ENCODE measurements at regions of chr3 and their contacts with region 1.

Region 1: GRCh38 chr3:45367453-45367871 is 20.9 kb upstream of the LARS2 start:
- DNase-seq: no peak
- H3K4me3 ChIP-seq: no peak overlapping the region
- H3K27ac ChIP-seq: no peak overlapping the region
- H3K4me1 ChIP-seq: no peaks in the 10 kb centered on the region
- H3K27me3 ChIP-seq: no peaks in the 10 kb centered on the region
- CTCF ChIP-seq: no peak
- POLR2A ChIP-seq: no peak

Region 2: DNA sequence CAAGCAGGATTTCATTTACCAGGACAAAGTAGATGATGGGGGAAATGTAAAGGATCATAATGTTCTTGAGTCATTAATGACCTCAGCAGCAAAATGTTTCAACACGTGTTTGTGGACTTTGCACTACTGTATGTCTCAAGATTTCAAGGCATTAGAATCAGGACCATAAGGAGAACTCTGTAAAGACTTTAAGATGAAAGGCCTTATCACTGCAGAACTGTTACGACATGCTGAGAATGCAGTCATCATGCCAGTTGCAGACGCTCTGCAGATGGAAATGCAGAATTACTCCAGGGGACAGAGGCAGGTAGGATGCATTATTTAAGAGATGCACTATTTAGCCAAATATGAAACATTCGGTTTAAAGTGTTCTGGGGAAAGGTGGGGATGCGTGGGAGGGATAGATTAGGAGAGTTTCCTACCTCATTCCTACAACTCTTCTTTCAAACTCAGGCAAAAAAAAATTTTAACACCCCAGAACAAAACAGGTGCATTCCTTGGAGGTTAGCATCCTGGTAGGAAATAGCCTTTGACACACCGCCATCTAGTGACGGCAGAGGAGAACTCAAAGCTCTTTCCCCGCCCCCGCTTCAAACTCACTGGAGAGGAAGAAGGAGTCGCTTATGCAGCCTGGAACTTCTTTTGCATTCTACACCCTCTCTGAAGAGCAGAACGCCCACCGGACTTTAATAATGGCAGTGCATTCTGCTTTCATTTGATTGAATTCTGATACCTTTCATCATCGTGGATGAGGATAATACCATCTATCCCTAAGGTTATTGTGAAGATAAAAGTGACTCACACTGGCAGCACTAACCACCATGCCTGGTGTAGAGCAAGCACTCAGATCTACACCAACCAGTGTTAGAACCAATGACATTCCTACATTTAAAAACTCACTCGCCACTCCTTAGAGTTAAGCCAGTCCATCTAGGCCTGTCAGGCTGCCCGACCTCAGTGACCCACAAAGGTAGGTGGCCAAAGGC is 1168.9 kb before region 1 on chr3:
- intact Hi-C with region 1: no loop called
- DNase-seq: peak; percentile 57 to 65
- H3K4me3 ChIP-seq: no peak overlapping the region
- H3K27ac ChIP-seq: no peak overlapping the region
- H3K4me1 ChIP-seq: no peaks in the 10 kb centered on the region
- H3K27me3 ChIP-seq: peaks cover 0 to 3% of the 10 kb centered on the region in 2 donors
- CTCF ChIP-seq: peak; percentile 41 to 85 (median 77)
- POLR2A ChIP-seq: no peak

Region 3: DNA sequence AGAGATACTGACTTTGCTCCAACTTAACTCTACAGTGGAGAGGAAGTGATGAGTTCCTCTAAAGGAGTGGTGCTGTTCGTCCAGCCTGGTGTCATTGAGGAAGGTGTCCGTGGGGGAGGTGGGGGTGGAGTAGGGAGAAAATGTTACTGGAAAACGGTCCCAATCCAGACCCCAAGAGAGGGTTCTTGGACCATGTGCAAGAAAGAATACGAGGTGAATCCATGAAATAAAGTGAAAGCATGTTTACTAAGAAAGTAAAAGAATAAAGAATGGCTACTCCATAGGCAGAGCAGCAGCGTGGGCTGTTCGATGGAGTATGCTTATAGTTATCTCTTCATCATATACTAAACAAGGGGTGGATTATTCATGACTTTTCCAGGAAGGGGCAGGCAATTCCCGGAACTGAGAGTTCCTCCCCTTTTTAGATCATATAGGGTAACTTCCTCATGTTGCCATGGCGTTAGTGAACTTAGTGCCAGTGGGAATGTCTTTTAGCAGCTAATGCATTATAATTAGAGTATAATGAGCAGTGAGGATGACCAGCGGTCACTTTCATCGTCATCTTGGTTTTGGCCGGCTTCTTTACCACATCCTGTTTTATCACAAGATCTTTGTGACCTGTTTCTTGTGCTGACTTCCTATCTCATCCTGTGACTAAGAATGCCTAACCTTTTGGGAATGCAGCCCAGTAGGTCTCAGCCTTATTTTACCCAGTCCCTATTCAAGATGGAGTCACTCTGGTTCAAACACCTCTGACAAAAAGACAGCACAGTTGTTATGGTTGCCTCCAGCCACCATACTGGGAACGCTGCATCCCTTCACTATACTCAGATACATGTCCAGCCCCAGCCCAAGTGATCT is 302.7 kb before region 1 on chr3:
- intact Hi-C with region 1: loop called (anchors 10 kb)
- DNase-seq: no peak
- H3K4me3 ChIP-seq: peak overlapping the region in 1 of 3 donors; percentile 35
- H3K27ac ChIP-seq: peak overlapping the region in 1 of 2 donors; percentile 75
- H3K4me1 ChIP-seq: no peaks in the 10 kb centered on the region
- H3K27me3 ChIP-seq: no peaks in the 10 kb centered on the region
- CTCF ChIP-seq: no peak
- POLR2A ChIP-seq: no peak

Region 4: GRCh38 chr3:45333549-45333948 is 33.9 kb before region 1 on chr3:
- intact Hi-C with region 1: loop called (anchors 2 kb)
- DNase-seq: no peak
- H3K4me3 ChIP-seq: no peak overlapping the region
- H3K27ac ChIP-seq: no peak overlapping the region
- H3K4me1 ChIP-seq: no peaks in the 10 kb centered on the region
- H3K27me3 ChIP-seq: no peaks in the 10 kb centered on the region
- CTCF ChIP-seq: no peak
- POLR2A ChIP-seq: no peak

Region 5: DNA sequence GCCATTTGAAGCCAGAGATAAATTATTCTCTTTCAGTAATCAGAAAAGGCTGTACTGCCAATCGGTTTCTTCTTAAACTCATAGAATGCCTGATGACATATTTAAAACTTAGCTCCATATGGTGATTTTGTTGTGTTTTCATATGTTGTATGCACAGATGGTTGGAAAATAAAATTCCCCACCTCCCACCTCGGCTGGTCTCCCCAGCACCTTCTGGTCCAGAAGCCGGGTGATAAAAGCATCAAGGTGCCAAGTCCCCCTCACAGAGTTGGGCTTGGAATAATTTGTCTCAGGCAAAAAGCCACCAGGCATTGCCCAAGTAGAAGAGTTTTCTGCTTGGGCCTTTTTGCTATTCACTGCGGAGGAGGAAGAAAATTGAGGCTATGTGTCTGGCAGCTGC is 39.3 kb after region 1 on chr3:
- intact Hi-C with region 1: no loop called
- DNase-seq: no peak
- H3K4me3 ChIP-seq: no peak overlapping the region
- H3K27ac ChIP-seq: no peak overlapping the region
- H3K4me1 ChIP-seq: peaks cover 0 to 9% of the 10 kb centered on the region in 2 donors
- H3K27me3 ChIP-seq: no peaks in the 10 kb centered on the region
- CTCF ChIP-seq: no peak
- POLR2A ChIP-seq: no peak

Region 6: GRCh38 chr3:46416125-46416810 is 1048.8 kb after region 1 on chr3:
- intact Hi-C with region 1: loop called (anchors 5 kb)
- DNase-seq: no peak
- H3K4me3 ChIP-seq: no peak overlapping the region
- H3K27ac ChIP-seq: no peak overlapping the region
- H3K4me1 ChIP-seq: no peaks in the 10 kb centered on the region
- H3K27me3 ChIP-seq: no peaks in the 10 kb centered on the region
- CTCF ChIP-seq: no peak
- POLR2A ChIP-seq: no peak